ENCODE measurements at regions of chr2 and their contacts with region 1.

Region 1: DNA sequence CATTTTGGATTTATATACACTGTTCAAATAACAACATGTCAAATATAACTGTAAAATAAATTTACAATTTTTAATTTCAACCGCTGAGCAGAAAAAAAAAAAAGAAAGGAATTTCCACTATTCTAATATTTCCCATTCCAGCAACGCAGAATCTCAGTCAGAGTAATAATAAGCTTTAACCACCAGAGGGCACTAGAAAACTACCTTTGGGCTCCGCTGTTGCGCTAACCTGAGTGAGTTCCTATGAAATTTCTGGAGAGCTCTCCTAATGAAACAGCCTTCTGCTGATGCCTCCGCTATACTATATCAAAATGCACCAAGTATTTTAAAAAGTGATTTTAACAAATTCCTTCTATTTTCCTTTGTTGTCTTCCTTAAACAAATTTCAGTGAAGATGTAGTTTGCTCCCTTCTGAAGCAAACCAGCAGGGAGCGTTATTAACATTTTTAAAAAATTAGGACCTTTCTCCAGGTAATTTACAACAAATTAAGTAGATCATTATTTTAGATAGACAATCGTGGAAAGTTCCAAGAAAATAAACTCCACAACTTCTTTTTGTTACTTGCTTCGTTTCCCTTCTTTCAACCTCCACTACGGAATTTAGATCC is 23.0 kb downstream of the ERMN start:
- DNase-seq: peak; percentile 33
- H3K4me3 Mint-ChIP-seq: no peak overlapping the region
- H3K27ac Mint-ChIP-seq: no peak overlapping the region
- H3K4me1 Mint-ChIP-seq: peaks cover 19% of the 10 kb centered on the region
- H3K27me3 Mint-ChIP-seq: peaks cover 4% of the 10 kb centered on the region

Region 2: GRCh38 chr2:157327621-157328500 is 25.3 kb after region 1 on chr2:
- CTCF ChIA-PET with region 1: interaction called, 66 read pairs
- POLR2A ChIA-PET with region 1: interaction called, 3 read pairs
- DNase-seq: peak; percentile 87
- H3K4me3 Mint-ChIP-seq: no peak overlapping the region
- H3K27ac Mint-ChIP-seq: no peak overlapping the region
- H3K4me1 Mint-ChIP-seq: peaks cover 42% of the 10 kb centered on the region
- H3K27me3 Mint-ChIP-seq: no peaks in the 10 kb centered on the region

Region 3: DNA sequence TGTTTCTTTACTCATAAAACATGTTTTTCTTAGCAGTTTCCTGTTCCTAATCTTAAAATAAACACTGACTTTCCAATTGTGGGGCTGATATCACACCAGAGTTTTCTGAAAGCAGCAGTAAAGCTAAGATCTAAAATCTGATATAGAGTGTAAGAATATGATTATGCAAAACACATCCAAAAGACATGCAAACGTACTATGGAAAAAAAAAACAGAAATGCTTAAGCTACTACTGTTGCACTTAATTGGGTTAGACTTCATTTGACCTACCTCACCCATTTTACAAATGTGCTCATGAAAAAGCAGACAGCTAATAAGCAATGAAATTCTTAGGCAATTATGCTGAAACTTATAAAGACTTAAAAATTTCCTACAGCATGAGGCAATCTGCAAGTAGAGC is 130.8 kb after region 1 on chr2:
- CTCF ChIA-PET with region 1: interaction called, 12 read pairs
- POLR2A ChIA-PET with region 1: interaction called, 6 read pairs
- DNase-seq: no peak
- H3K4me3 Mint-ChIP-seq: peak overlapping the region; percentile 91
- H3K27ac Mint-ChIP-seq: peak overlapping the region; percentile 80
- H3K4me1 Mint-ChIP-seq: peaks cover 78% of the 10 kb centered on the region
- H3K27me3 Mint-ChIP-seq: no peaks in the 10 kb centered on the region

Region 4: DNA sequence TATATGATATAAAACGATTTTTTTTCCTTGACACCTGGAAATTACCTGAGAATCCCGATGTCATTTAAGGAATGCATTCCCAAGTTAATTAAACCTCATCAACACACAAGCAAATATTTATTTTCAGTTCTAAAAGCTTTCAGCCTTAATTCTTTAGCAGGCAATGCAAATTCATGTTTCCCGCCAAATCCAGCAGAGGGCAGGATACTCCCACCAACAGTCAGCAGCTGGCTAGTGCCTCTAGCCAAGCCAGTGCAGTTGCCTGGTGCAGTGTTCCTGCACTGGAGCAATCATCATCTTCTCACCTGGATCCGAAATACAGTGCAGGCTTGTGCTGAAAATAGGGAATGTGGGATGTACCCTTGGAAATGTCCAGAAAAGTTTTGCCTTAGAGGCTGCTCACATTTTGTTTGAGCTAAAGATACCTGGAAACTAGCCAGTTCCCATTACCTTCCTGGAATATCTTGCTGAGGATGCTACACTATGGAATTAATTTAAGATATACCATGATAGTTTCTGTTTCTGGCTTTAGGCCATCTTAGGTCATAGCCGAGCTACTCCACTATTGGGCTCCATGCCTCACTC is 189.7 kb after region 1 on chr2:
- CTCF ChIA-PET with region 1: interaction called, 50 read pairs
- POLR2A ChIA-PET with region 1: interaction called, 3 read pairs
- DNase-seq: peak; percentile 79
- H3K4me3 Mint-ChIP-seq: no peak overlapping the region
- H3K27ac Mint-ChIP-seq: no peak overlapping the region
- H3K4me1 Mint-ChIP-seq: peaks cover 66% of the 10 kb centered on the region
- H3K27me3 Mint-ChIP-seq: no peaks in the 10 kb centered on the region

Region 5: DNA sequence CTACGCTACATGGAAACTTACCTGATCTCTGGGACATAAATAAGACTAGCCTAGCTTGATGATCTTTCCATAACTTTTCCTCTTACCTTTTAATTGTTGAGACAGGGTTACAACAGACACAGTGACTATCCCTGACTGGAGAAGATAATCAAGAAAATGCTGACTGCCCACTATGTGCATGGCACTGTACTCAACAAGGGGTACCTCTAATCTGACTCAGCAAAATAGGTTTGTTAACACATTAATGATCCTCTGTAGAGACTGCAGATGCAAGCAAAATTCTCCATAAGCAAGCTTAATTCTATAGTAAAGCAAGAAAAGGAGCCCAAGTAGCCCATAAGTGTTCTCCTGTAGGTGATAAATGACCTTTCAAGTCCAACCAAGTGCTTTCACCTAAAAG is 300.6 kb after region 1 on chr2:
- CTCF ChIA-PET with region 1: interaction called, 118 read pairs
- POLR2A ChIA-PET with region 1: no interaction called
- DNase-seq: no peak
- H3K4me3 Mint-ChIP-seq: no peak overlapping the region
- H3K27ac Mint-ChIP-seq: no peak overlapping the region
- H3K4me1 Mint-ChIP-seq: peaks cover 2% of the 10 kb centered on the region
- H3K27me3 Mint-ChIP-seq: peaks cover 13% of the 10 kb centered on the region

Region 6: DNA sequence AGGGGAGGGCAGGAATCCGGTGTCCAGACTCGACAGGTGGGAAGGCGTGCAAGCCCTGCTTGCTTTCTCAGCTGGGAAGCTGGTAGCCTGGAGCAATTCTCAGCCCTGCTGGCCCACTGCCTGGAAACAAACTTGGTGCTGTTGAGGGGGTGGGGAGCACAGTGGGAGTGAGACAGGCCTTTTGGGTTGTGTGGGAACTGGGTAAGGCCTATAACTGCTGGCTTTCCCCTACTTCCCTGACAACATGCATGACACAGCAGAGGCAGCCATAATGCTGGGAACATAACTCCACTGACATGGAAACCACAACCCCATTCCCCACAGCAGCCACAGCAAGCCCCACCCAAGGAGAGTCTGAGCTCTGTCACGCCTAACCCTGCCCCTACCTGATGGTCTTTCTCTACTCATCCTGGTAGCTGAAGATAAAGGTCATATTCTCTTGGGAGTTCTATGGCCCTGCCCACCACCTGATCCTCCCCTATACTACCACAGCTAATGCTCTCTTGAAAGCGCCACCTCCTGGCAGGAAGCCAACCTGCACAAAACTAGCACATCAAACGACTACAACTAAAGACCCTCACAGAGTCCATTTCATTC is 449.0 kb after region 1 on chr2:
- CTCF ChIA-PET with region 1: interaction called, 11 read pairs
- POLR2A ChIA-PET with region 1: no interaction called
- DNase-seq: no peak
- H3K4me3 Mint-ChIP-seq: no peak overlapping the region
- H3K27ac Mint-ChIP-seq: no peak overlapping the region
- H3K4me1 Mint-ChIP-seq: peaks cover 30% of the 10 kb centered on the region
- H3K27me3 Mint-ChIP-seq: no peaks in the 10 kb centered on the region

Region 7: GRCh38 chr2:158024288-158024898 is 721.8 kb after region 1 on chr2:
- CTCF ChIA-PET with region 1: interaction called, 12 read pairs
- POLR2A ChIA-PET with region 1: no interaction called
- DNase-seq: peak; percentile 58
- H3K4me3 Mint-ChIP-seq: no peak overlapping the region
- H3K27ac Mint-ChIP-seq: no peak overlapping the region
- H3K4me1 Mint-ChIP-seq: peaks cover 5% of the 10 kb centered on the region
- H3K27me3 Mint-ChIP-seq: peaks cover 3% of the 10 kb centered on the region

Measured in activated CD4-positive, alpha-beta memory T cell treated with anti-CD3 and anti-CD28 coated beads, Interleukin-2, amount 10 ng/mL, durations not matched to agents 7 days and 5 days (primary cell).